ENCODE measurements at regions of chr3 and their contacts with region 1.

Region 1: DNA sequence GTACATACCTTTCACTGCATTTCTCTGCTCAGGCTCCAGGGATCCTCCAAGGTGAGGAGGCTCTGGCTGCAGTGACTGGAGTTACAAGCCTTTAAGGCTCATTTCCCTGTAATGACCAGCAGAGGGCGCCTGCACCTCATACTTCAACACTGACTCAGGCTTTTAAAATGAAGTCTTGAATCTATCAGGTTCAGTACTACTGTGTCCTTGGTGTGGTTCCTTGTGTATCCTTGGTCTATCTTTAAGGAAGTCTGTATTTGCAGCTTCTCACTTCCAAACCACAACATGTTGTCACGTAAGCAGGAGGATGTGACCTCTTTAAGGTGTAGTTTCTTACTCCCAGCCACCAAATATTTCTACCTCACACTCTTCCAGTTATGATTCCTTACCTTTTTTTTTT is 122.5 kb upstream of the ZBED2 start:
- DNase-seq: peak; percentile 88
- H3K4me3 ChIP-seq: no peak overlapping the region
- H3K27ac ChIP-seq: peak overlapping the region; percentile 33
- H3K4me1 ChIP-seq: peaks cover 18% of the 10 kb centered on the region
- H3K27me3 ChIP-seq: no peaks in the 10 kb centered on the region
- CTCF ChIP-seq: peak; percentile 90 to 92

Region 2: DNA sequence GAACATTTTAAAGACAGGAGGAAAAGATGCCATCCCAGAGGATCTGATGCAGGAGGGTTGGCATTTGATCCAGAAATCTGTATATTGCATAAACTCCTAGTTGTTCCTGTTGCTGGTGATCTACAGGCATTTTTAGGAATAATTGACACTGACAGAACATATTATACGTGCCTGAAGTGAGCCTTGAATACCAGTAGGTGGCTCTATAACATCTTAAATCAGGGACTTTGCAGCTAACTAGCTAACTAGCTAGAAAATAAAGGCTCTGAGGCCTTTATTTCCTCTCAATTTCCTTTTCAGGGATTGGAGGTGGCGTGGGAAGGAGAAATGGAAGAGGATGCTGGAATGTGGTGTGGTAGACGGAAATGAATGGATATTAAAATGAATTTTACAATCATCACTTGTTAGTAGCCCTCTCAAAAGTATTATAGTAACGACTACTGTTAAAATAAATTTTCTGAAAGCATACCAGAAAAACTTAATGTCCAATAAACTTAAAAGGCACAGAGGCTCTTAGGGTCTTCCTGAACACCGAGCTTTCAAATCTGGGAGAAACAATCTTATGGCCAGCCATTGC is 48.6 kb before region 1 on chr3:
- CTCF ChIA-PET with region 1: interaction called, 10 read pairs
- dilution Hi-C with region 1: no loop called
- in situ Hi-C with region 1: no loop called
- intact Hi-C with region 1: loop called (anchors 1 kb)
- DNase-seq: peak; percentile 48
- H3K4me3 ChIP-seq: no peak overlapping the region
- H3K27ac ChIP-seq: no peak overlapping the region
- H3K4me1 ChIP-seq: peaks cover 49% of the 10 kb centered on the region
- H3K27me3 ChIP-seq: no peaks in the 10 kb centered on the region
- CTCF ChIP-seq: peak; percentile 76 to 85

Region 3: DNA sequence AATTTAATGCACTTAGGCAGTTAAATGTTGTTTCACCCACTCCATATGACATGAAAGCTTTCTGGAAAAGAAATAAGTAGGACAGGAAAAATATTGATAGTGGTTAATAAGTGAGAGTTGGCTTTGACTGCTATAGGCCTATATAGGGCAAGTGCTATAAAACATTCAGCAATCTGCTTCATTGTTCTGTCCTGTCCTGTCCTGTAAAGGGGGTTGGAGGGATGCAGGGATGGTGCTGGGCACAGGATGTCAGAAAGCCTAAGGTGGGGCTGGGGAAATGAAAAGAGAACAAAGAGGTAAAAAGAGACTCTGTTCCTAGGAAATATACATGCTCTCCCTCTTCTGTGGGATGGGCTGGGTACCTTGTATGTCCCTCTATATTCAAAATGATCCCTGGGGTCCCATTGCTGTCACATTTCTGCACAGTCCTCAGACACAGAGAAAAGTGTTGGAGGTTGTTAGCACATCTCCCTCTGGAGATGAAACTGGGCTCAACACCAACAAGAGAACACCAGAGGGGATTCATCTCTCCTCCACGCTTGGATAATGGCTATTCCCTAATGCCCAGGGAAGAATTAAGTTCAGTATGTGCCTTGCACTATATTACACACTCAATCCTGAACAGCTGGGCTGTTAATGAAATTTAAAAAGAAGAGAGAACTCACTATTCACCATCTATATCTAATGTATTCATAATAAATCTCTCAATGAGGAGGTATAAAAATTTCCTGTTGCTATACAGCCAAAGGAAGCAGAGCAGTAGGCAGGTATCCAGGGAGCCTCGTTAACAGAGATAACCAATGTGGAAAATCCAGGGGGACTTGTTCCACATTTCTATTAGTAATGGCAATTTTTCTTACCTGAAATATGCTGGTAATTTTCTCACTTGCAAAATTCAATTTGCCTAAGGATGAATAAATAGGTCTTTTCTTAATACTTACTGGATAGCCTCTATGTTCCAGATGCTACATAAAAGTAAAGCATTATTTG is 14.3 kb before region 1 on chr3:
- CTCF ChIA-PET with region 1: no interaction called
- dilution Hi-C with region 1: no loop called
- in situ Hi-C with region 1: no loop called
- intact Hi-C with region 1: no loop called
- DNase-seq: no peak
- H3K4me3 ChIP-seq: no peak overlapping the region
- H3K27ac ChIP-seq: no peak overlapping the region
- H3K4me1 ChIP-seq: no peaks in the 10 kb centered on the region
- H3K27me3 ChIP-seq: no peaks in the 10 kb centered on the region
- CTCF ChIP-seq: no peak

Region 4: GRCh38 chr3:111761309-111761831 is 43.8 kb after region 1 on chr3:
- CTCF ChIA-PET with region 1: no interaction called
- dilution Hi-C with region 1: no loop called
- in situ Hi-C with region 1: no loop called
- intact Hi-C with region 1: loop called (anchors 1 kb)
- DNase-seq: peak; percentile 100
- H3K4me3 ChIP-seq: no peak overlapping the region
- H3K27ac ChIP-seq: peak overlapping the region; percentile 100
- H3K4me1 ChIP-seq: peaks cover 60% of the 10 kb centered on the region
- H3K27me3 ChIP-seq: no peaks in the 10 kb centered on the region
- CTCF ChIP-seq: no peak

Region 5: DNA sequence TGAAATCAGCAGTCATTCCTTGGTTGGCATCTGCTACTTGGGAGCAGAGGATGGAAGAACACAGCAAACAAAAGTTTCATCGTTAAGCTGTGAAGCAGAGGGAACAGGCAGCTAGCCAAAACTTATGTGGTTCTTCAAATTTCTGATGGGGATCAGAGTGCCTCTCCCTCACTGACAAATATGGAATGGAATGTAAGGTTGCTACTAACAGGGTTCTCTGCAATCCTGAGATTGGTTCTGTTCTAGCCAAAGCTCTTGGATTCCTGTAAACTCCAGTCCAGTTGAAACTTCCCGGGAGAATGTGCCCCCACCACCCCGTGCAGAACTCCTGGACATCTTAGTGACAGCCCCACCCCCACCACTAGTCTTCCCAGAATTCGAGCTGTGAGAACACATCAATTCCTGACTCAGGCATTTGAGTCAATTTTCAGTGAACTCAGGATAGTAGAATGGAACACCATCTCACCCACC is 85.6 kb after region 1 on chr3:
- CTCF ChIA-PET with region 1: interaction called, 4 read pairs
- dilution Hi-C with region 1: no loop called
- in situ Hi-C with region 1: no loop called
- intact Hi-C with region 1: loop called (anchors 1 kb)
- DNase-seq: peak; percentile 96
- H3K4me3 ChIP-seq: peak overlapping the region in 1 of 3 experiments; percentile 4
- H3K27ac ChIP-seq: peak overlapping the region; percentile 100
- H3K4me1 ChIP-seq: peaks cover 40% of the 10 kb centered on the region
- H3K27me3 ChIP-seq: no peaks in the 10 kb centered on the region
- CTCF ChIP-seq: no peak

Region 6: DNA sequence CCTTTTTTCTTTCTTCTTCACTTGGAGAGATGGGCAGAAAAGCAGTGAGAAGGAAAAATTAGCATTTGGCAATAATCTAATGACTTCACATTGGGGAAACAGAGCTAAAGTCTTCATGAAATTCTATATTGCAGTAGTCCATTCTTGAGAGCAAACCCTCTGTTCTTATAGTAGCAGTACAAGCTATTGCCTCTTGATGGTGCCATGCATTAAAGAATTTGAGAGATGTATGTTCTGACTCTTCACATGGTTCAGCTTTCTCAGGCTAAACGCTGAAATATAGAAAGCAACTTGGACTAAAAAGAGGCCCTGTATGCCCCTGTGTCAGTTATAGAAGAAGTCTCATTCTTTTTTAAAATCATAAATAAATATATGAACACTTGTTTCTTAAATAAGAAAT is 177.5 kb after region 1 on chr3:
- CTCF ChIA-PET with region 1: interaction called, 3 read pairs
- dilution Hi-C with region 1: no loop called
- in situ Hi-C with region 1: no loop called
- intact Hi-C with region 1: loop called (anchors 1 kb)
- DNase-seq: no peak
- H3K4me3 ChIP-seq: no peak overlapping the region
- H3K27ac ChIP-seq: no peak overlapping the region
- H3K4me1 ChIP-seq: no peaks in the 10 kb centered on the region
- H3K27me3 ChIP-seq: no peaks in the 10 kb centered on the region
- CTCF ChIP-seq: peak; percentile 28 to 48

Region 7: GRCh38 chr3:111967651-111968274 is 250.2 kb after region 1 on chr3:
- CTCF ChIA-PET with region 1: no interaction called
- dilution Hi-C with region 1: loop called (anchors 25 kb)
- in situ Hi-C with region 1: loop called in 1 of 2 experiments (anchors 25 kb)
- intact Hi-C with region 1: loop called (anchors 1 kb)
- DNase-seq: peak; percentile 58
- H3K4me3 ChIP-seq: no peak overlapping the region
- H3K27ac ChIP-seq: no peak overlapping the region
- H3K4me1 ChIP-seq: peaks cover 16% of the 10 kb centered on the region
- H3K27me3 ChIP-seq: no peaks in the 10 kb centered on the region
- CTCF ChIP-seq: peak; percentile 85 to 86

Region 8: GRCh38 chr3:112013058-112013783 is 295.6 kb after region 1 on chr3:
- CTCF ChIA-PET with region 1: no interaction called
- dilution Hi-C with region 1: no loop called
- in situ Hi-C with region 1: no loop called
- intact Hi-C with region 1: loop called (anchors 1 kb)
- DNase-seq: peak; percentile 62
- H3K4me3 ChIP-seq: no peak overlapping the region
- H3K27ac ChIP-seq: no peak overlapping the region
- H3K4me1 ChIP-seq: no peaks in the 10 kb centered on the region
- H3K27me3 ChIP-seq: no peaks in the 10 kb centered on the region
- CTCF ChIP-seq: peak; percentile 83 to 86